Gastrocnemius medialis (tissue), 4 donors: ENCODE measurements at regions of chr12 and their contacts with region 1.

Region 1: DNA sequence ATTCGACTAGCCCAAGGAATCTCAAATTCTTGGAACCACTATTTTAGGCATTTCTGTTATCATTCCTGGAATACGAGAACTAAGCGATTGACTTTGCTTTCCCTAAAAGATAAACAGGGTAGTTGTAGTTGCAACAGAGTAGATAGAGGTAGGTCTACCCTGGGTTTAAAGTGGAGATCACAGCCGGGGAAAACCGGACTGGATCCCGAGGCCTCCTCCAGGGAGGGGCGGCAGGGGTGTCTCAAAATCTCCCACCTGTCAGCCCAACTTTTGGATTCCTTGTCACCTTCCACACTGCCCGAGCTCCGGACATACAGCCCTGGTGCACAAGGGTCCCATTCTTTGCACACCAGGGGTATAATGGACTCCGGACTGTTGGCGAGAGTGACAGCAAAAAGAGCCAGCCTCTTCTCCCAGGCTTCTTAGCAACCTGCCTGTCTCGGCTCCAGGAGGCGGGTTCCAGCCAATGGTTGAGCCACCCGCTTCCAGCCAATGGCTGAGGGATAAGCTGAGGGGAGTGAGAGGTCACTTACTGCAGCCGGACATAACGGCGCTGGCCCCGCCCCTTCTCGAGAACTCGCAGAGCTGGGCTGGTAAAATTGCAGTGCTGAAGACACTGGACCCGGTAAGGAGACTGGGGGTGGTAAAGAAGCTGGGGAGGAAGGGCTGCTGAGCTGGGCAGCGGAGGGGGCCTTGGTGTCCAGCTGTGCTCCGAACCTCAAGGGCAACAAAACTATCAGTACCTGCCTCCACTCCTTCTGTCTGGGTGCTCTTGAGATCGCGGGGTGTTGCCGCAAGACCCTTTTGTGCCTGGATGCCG is at the start of gene SUOX:
- DNase-seq: peak; percentile 97 to 99
- ATAC-seq: peak; percentile 99 to 100
- H3K4me3 ChIP-seq: peak within 1 kb of the TSS; percentile 66 to 83 (median 77)
- H3K27ac ChIP-seq: peak within 1 kb of the TSS; percentile 83 to 96 (median 90)
- H3K4me1 ChIP-seq: peaks cover 12 to 14% of the 10 kb centered on the region in 2 donors
- H3K27me3 ChIP-seq: no peaks in the 10 kb centered on the region
- CTCF ChIP-seq: no peak
- POLR2A ChIP-seq: peak; percentile 45 to 58
- total RNA-seq, gene SUOX: 10.1 to 28.1 (median 18.9) TPM

Region 2: DNA sequence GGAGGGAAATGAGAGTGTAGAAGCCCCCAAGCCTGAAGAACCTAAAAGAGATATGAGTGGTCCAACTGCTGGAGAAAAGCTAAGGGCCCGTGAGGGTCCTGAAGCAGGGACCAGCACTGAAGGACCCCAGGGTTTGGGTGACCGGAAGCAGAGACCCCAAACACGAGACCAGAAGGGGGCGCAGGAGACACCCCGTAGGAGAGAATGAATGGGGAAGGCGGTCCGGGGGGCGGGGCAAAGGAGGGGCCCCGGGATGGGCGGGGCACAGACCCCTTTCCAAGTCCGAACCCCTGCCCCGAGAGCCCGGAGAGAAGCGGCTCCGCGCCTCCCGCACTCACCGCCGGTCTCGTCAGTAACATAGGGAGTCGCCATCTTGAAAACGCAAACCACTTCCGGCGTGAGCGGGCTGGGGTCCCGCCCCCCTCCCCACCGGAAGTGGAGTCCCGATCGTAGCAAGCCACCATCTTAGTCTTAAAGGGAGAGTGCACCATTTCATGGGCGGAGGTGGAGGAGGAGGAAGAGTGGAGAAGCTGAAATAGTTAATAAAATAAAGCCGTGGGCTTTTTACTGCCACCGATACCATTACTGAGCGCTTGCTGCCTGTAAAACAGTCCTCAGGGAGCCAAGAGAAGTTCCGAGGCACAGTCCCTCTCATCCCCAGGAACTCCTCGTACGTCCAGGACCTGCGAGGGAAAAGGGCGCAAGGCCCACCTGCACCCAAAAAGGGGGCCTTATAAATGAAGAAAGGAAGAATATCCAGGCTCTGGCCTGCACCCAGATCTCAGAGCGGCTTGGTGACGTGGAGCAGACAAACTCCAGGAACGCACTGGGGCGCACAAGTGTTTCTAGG is 70.0 kb before region 1 on chr12:
- in situ Hi-C with region 1: no loop called
- intact Hi-C with region 1: no loop called
- DNase-seq: peak; percentile 72 to 84
- ATAC-seq: peak; percentile 93 to 95
- H3K4me3 ChIP-seq: peak overlapping the region; percentile 92 to 100 (median 94)
- H3K27ac ChIP-seq: peak overlapping the region; percentile 94 to 98 (median 98)
- H3K4me1 ChIP-seq: peaks cover 25 to 29% of the 10 kb centered on the region in 2 donors
- H3K27me3 ChIP-seq: peaks cover 0 to under 1% (median 0%) of the 10 kb centered on the region in 3 donors
- CTCF ChIP-seq: peak; percentile 56 to 82 (median 73)
- POLR2A ChIP-seq: peak in 1 of 2 donors; percentile 45

Region 3: DNA sequence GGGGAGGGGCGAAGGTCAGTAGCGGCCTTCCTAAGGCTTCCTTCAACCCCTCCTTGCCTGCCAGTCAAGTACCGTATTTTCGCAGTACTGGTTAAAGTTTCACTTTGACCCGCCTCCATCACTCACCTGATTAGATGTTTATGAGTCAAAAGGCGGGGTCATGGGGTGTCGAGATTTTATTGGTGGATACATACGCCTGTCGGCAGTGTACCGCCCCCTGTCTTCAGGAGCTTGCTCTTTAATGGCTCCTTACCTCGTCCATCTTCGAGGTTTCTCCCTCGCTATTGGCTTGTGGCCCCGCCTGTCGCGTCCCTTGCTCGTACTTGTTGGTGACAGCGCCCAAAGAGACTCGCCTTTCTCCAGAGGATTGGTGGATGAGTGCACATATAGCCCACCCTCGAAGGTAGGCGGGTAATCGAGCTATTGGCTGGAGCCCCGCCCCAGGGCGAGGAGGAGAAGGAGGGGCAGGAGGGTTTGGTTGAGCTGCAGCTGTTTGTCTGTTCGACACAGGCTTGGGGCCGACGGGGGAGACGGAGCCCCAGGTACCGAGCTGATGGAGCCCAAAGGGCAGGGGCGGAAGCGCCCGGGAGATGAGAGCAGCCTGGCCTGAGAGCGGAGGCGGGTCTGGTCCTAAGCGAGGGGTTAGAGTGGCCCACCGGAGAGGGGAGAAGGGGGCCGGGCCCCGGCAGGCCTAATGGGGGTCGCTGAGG is 23.2 kb before region 1 on chr12 and contains the start of gene RAB5B:
- in situ Hi-C with region 1: no loop called
- intact Hi-C with region 1: loop called (anchors 1 kb)
- DNase-seq: peak; percentile 100
- ATAC-seq: peak; percentile 90 to 96
- H3K4me3 ChIP-seq: peak within 1 kb of the TSS; percentile 86 to 100 (median 98)
- H3K27ac ChIP-seq: peak within 1 kb of the TSS; percentile 95 to 100 (median 98)
- H3K4me1 ChIP-seq: peaks cover 28 to 36% of the 10 kb centered on the region in 2 donors
- H3K27me3 ChIP-seq: no peaks in the 10 kb centered on the region
- CTCF ChIP-seq: peak in 3 of 5 experiments; percentile 14 to 60 (median 37)
- POLR2A ChIP-seq: peak; percentile 97
- total RNA-seq, gene RAB5B: 75.5 to 84.9 (median 81.8) TPM

Region 4: DNA sequence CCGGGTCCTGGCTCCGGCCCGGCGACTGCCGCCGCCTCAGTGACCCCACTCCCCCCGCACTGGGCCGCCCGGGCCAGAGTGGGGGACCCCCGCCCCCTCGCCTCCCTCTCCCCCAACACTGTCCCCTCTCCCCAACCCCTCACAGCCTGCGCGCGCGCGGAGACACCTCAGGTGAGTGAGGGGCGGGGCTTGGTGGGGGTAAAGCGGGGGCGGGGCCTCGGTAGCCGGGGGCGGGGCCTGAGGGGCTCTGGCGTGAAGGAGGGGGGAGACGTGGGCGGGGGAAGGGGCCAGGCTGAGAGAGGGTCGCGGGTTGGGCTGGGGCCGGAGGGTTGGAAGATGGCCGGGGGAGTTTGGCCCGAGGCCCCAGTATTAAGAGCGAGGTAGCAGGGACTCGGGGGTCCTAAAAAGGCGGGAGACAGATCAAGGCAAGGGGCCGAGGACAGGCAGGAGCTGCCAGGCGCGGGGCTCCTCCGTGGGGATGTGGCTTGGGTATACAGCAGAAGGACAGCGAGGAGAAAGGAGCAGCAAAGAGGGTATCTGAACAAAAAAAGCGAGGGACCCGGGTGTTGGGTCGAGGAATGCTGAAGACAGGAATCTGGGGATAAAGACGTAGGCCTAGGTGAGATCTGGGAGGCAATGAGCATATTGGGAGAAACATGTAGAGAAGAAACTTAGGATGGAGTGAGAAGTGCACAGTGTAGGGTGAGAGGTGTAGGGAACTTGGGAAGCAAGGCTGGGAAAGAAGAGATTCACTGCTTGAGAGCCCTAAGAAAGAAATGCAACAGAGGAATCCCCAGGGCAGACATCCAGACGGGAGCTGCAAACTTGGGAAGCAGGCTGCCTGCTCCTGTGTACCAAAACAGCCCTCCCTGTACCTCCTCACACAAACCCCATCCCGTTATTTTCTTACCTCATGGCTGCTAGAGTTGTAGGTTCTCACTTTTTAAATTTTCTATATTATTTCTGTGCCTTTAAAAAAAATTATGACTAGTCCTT is 10.9 kb after region 1 on chr12:
- in situ Hi-C with region 1: no loop called
- intact Hi-C with region 1: loop called (anchors 1 kb)
- DNase-seq: peak in 1 of 2 donors; percentile 35
- ATAC-seq: peak; percentile 66 to 71
- H3K4me3 ChIP-seq: peak overlapping the region; percentile 89 to 99 (median 95)
- H3K27ac ChIP-seq: peak overlapping the region; percentile 86 to 98 (median 96)
- H3K4me1 ChIP-seq: peaks cover 7 to 10% of the 10 kb centered on the region in 2 donors
- H3K27me3 ChIP-seq: no peaks in the 10 kb centered on the region
- CTCF ChIP-seq: no peak
- POLR2A ChIP-seq: no peak

Region 5: GRCh38 chr12:56041552-56042429 is 44.9 kb after region 1 on chr12 and contains the start of gene RPS26:
- in situ Hi-C with region 1: loop called in 1 of 4 experiments (anchors 5 kb)
- intact Hi-C with region 1: loop called (anchors 1 kb)
- DNase-seq: peak; percentile 96 to 97
- ATAC-seq: peak; percentile 98 to 99
- H3K4me3 ChIP-seq: peak within 1 kb of the TSS; percentile 66 to 94 (median 86)
- H3K27ac ChIP-seq: peak within 1 kb of the TSS; percentile 87 to 98 (median 94)
- H3K4me1 ChIP-seq: peaks cover 15 to 19% of the 10 kb centered on the region in 2 donors
- H3K27me3 ChIP-seq: no peaks in the 10 kb centered on the region
- CTCF ChIP-seq: peak; percentile 11 to 70 (median 40)
- POLR2A ChIP-seq: peak; percentile 86 to 90
- total RNA-seq, gene RPS26: 618 to 1,648 (median 1,209) TPM

Region 6: GRCh38 chr12:56104109-56104814 is 107.3 kb after region 1 on chr12 and contains the start of gene PA2G4:
- in situ Hi-C with region 1: no loop called
- intact Hi-C with region 1: loop called (anchors 5 kb)
- DNase-seq: peak; percentile 98
- ATAC-seq: peak; percentile 95 to 96
- H3K4me3 ChIP-seq: peak within 1 kb of the TSS; percentile 77 to 98 (median 84)
- H3K27ac ChIP-seq: peak within 1 kb of the TSS; percentile 85 to 93 (median 92)
- H3K4me1 ChIP-seq: peaks cover 20 to 26% of the 10 kb centered on the region in 2 donors
- H3K27me3 ChIP-seq: no peaks in the 10 kb centered on the region
- CTCF ChIP-seq: no peak
- POLR2A ChIP-seq: peak; percentile 85 to 96
- total RNA-seq, gene PA2G4: 109 to 204 (median 127) TPM